ENCODE measurements at regions of chr2 and their contacts with region 1.

Region 1: GRCh38 chr2:178136321-178137025 is 24.2 kb downstream of the RBM45 start:
- DNase-seq: no peak
- ATAC-seq: no peak
- H3K4me3 ChIP-seq: no peak overlapping the region
- H3K27ac ChIP-seq: no peak overlapping the region
- H3K4me1 ChIP-seq: peaks cover 0 to 3% (median 0%) of the 10 kb centered on the region in 12 donors
- H3K27me3 ChIP-seq: no peaks in the 10 kb centered on the region
- CTCF ChIP-seq: no peak
- POLR2A ChIP-seq: no peak

Region 2: DNA sequence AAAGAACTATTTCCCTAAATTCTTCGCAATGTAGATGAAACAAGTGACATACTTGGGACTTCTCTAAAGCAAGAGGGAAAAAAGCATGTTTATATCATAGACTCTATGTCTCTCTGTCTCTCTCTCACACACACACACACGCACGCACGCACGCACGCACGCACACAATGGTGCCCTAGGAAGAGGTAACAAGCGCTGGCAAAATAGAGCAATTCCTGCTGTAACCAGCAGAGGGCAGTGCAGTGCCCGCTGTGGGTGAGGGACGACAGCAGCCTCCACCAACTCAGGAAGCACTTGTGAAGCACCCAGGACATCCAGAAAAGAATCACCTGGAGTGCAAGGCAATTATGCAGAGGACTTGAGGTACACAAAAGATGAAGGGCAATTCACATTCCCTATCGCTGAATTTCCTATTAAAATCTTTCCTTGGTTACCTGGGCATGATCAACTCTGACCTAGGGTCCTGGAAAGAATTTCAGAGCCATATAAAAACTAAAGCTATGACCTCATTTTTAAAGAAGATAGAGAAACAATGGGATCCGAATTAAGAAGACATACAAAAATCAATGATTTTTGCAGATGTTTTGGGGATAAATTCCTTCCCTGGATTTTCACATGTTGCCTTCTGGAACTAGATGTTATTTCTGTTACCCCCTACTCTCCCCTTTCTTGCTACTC is 230.3 kb before region 1 on chr2:
- intact Hi-C with region 1: no loop called
- DNase-seq: peak in 4 of 5 donors; percentile 15 to 64 (median 32)
- ATAC-seq: peak in 2 of 4 donors; percentile 41 to 66
- H3K4me3 ChIP-seq: no peak overlapping the region
- H3K27ac ChIP-seq: no peak overlapping the region
- H3K4me1 ChIP-seq: peaks cover 0 to 19% (median 5%) of the 10 kb centered on the region in 12 donors
- H3K27me3 ChIP-seq: no peaks in the 10 kb centered on the region
- CTCF ChIP-seq: peak; percentile 54 to 80 (median 64)
- POLR2A ChIP-seq: no peak

Region 3: GRCh38 chr2:178208817-178209216 is 72.3 kb after region 1 on chr2:
- intact Hi-C with region 1: loop called in 1 of 10 experiments (anchors 10 kb)
- DNase-seq: no peak
- ATAC-seq: no peak
- H3K4me3 ChIP-seq: no peak overlapping the region
- H3K27ac ChIP-seq: no peak overlapping the region
- H3K4me1 ChIP-seq: peaks cover 0 to 9% (median 0%) of the 10 kb centered on the region in 12 donors
- H3K27me3 ChIP-seq: no peaks in the 10 kb centered on the region
- CTCF ChIP-seq: peak in 8 of 12 donors; percentile 4 to 43 (median 23)
- POLR2A ChIP-seq: no peak

Region 4: DNA sequence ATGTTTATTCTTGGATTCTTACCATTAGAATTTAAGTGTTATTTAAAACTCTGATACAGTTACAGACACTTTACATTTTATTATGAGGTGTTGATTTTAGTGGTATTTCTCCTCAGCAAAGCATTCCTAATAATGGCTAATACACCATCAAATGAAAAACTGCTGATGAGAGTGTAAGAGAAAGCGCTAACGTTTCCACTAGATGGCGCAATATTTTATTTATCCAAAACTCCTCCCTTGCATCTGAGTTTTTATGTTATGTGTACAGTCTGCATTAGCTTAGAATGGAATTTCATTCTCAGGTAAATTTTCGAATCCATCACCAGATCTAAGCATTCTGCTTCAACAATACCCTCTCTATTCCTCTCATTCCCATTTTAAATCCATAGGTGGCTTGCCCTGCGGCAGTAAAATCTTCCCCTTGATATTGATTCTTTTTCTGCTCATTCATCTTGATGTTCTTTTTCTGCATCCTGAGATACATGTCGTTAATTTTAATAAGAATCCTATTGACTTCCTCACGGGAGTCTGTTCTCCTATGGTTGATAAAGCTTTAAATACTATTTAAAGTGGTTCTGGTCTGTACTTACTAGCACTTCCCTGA is 260.6 kb after region 1 on chr2:
- intact Hi-C with region 1: loop called in 2 of 10 experiments (anchors 10 kb)
- DNase-seq: no peak
- ATAC-seq: peak in 3 of 4 donors; percentile 61 to 71 (median 63)
- H3K4me3 ChIP-seq: no peak overlapping the region
- H3K27ac ChIP-seq: no peak overlapping the region
- H3K4me1 ChIP-seq: peaks cover 0 to 3% (median 0%) of the 10 kb centered on the region in 12 donors
- H3K27me3 ChIP-seq: no peaks in the 10 kb centered on the region
- CTCF ChIP-seq: peak; percentile 55 to 78 (median 72)
- POLR2A ChIP-seq: no peak

Measured in heart left ventricle (tissue), 16 donors.